HEK293 (cell line): ENCODE measurements at regions of chr1 and their contacts with region 1.

Region 1: DNA sequence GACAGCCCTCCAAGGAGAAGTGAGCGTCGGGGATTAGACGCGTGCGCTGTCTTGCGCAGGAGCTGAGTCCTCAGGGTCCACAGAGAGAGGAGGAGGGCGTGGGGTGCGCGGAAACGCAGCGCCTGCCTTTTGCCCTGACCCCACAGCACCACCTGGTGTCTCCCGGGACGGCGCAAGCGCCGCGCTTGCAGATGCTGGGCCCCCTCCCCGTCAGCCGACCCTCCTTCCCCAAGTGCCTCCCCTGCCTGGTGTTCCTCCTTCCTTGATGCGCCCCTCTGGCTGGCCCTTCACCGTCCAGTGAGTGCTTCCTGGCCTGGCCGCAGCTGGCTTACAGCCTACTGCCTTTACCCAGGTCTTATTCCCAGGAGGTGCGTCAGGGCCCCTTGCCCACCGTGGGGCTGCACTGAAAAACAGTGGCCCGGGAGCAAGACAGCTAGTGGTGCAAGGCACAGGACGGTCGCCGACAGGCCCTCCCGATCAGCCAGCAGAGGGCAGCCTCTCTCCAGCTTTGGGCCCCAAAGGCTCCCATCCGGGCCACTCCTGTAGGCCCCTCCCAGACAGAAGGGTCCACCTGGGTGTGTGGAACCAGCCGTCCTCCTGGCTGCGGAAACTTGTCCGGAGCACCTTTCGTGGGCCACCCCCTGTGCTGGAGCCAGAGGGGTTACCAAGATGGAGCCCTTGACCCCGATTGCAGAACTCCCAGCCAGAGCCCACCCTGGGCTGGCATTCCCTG is 12.9 kb upstream of the PHLDA3 start:
- H3K4me3 ChIP-seq: no peak overlapping the region
- H3K27ac ChIP-seq: no peak overlapping the region
- H3K4me1 ChIP-seq: no peaks in the 10 kb centered on the region
- CTCF ChIP-seq: peak; percentile 93

Region 2: DNA sequence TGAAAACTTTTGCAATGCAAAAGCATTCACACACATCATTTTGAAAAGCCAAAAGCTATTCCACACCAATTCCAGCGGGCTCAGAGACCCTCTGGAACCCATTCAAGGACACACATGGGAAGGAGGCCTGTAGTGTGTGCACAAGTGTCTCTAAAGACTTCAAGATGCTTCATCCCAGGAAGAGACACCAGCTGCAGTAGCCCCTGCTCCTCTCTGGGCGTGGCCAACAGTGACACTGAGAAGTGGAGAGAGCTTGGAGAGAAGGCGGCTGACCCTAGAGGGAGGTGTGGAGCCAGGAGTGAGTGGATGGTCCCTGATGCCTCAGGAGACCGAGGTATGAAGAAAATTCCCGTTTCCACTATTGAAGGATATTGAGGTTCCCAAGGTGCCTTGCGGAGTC is 45.5 kb before region 1 on chr1:
- CTCF ChIA-PET with region 1: interaction called, 27 read pairs
- POLR2A ChIA-PET with region 1: interaction called, 6 read pairs
- H3K4me3 ChIP-seq: no peak overlapping the region
- H3K27ac ChIP-seq: no peak overlapping the region
- H3K4me1 ChIP-seq: 0 out of 2 replicates have a peak, but pooled peaks cover 2% of the 10 kb centered on the region
- CTCF ChIP-seq: peak; percentile 56; the same call in 1 of the 2 replicates

Region 3: GRCh38 chr1:201468844-201469511 is 12.9 kb before region 1 on chr1 and contains the start of gene PHLDA3:
- CTCF ChIA-PET with region 1: interaction called, 14 read pairs
- POLR2A ChIA-PET with region 1: interaction called, 24 read pairs
- H3K4me3 ChIP-seq: peak within 1 kb of the TSS; percentile 71
- H3K27ac ChIP-seq: peak within 1 kb of the TSS; percentile 99
- H3K4me1 ChIP-seq: no peaks in the 10 kb centered on the region; the same call in 1 of the 2 replicates
- CTCF ChIP-seq: no peak

Region 4: DNA sequence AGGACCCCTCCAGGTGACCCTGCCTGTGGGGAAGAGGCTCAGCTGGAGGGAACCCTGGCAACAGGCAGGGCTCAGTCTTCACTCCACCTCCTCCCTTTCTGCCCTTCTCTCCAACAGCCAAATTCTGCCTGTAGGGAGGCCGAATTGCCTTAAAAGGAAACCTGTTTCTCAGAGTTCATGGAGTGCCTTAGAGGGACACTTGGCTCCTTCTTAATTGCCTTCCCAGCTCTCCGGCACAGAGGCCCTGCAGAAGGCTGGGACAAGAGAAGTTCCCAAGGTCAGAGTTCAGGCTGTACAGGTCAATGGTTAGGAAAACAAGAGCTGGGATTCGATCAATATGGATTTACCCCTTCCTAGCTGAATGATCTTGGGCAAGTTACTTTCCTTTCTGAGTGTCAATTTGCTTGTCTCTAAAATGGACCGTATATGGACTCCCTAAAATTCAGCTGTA is 18.8 kb after region 1 on chr1:
- CTCF ChIA-PET with region 1: interaction called, 61 read pairs
- POLR2A ChIA-PET with region 1: interaction called, 7 read pairs
- H3K4me3 ChIP-seq: no peak overlapping the region
- H3K27ac ChIP-seq: no peak overlapping the region
- H3K4me1 ChIP-seq: no peaks in the 10 kb centered on the region; the same call in none of the 2 replicates
- CTCF ChIP-seq: no peak

Region 5: GRCh38 chr1:201530741-201531531 is 49.0 kb after region 1 on chr1:
- CTCF ChIA-PET with region 1: interaction called, 48 read pairs
- POLR2A ChIA-PET with region 1: interaction called, 3 read pairs
- H3K4me3 ChIP-seq: no peak overlapping the region
- H3K27ac ChIP-seq: no peak overlapping the region
- H3K4me1 ChIP-seq: peaks cover 4% of the 10 kb centered on the region; the same call in 1 of the 2 replicates
- CTCF ChIP-seq: peak; percentile 87

Region 6: GRCh38 chr1:201559679-201560162 is 77.8 kb after region 1 on chr1:
- CTCF ChIA-PET with region 1: interaction called, 21 read pairs
- POLR2A ChIA-PET with region 1: no interaction called
- H3K4me3 ChIP-seq: no peak overlapping the region
- H3K27ac ChIP-seq: no peak overlapping the region
- H3K4me1 ChIP-seq: no peaks in the 10 kb centered on the region
- CTCF ChIP-seq: peak; percentile 99